CD14-positive monocyte (primary cell): ENCODE measurements at regions of chr1 and their contacts with region 1.

Region 1: DNA sequence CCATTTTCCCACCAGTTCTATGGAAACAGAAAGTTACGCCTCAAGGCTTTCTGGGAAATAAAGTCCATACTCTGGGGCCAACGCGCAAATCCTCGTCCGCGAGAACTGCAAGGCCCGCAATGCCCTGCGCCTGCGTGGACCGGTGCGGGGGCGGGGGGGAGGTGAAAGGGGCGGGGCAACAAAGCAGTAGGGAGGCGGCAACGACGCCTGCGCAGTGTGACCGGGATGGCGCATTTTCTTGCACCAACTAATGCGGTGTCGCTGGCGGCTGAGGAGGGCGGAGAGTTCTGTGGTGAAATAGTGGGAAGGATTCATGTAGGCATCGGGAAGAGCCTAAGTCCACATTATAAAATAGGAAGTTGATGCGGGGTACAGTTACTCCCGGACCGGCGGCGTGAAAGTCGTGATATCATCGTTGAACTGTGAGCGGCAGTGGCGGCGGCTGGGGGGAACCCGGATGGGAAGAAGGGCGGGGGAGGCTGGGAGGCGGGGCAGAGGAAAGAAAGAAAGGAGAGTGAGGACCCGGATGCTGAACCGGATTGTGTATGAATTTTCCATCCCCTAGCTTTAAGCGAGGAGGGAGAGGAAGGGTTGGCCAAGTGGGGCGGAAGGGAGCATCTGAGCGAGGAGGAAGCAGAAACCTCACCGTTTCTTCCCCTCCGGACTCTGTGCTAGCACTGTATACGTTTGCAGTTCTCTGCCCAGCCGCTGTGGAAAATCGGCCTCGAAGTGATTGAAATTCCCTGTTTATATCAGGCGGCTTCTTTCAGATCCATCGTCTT is at the start of gene GGPS1:
- DNase-seq: peak; percentile 99
- H3K4me3 ChIP-seq: peak within 1 kb of the TSS; percentile 81 to 99 (median 92)
- H3K4me3 Mint-ChIP-seq: no peak within 1 kb of the TSS
- H3K27ac ChIP-seq: peak within 1 kb of the TSS; percentile 90 to 96
- H3K27ac Mint-ChIP-seq: peak within 1 kb of the TSS in 5 of 7 donors; percentile 89 to 96 (median 90)
- H3K4me1 ChIP-seq: peaks cover 40 to 67% of the 10 kb centered on the region in 2 donors
- H3K4me1 Mint-ChIP-seq: peaks cover 37% of the 10 kb centered on the region
- H3K27me3 ChIP-seq: no peaks in the 10 kb centered on the region
- H3K27me3 Mint-ChIP-seq: peaks cover 0 to 2% (median 0%) of the 10 kb centered on the region in 3 donors
- CTCF ChIP-seq: peak; percentile 25
- polyA plus RNA-seq, gene GGPS1: 7.9 to 53.0 (median 45.8) TPM

Region 2: DNA sequence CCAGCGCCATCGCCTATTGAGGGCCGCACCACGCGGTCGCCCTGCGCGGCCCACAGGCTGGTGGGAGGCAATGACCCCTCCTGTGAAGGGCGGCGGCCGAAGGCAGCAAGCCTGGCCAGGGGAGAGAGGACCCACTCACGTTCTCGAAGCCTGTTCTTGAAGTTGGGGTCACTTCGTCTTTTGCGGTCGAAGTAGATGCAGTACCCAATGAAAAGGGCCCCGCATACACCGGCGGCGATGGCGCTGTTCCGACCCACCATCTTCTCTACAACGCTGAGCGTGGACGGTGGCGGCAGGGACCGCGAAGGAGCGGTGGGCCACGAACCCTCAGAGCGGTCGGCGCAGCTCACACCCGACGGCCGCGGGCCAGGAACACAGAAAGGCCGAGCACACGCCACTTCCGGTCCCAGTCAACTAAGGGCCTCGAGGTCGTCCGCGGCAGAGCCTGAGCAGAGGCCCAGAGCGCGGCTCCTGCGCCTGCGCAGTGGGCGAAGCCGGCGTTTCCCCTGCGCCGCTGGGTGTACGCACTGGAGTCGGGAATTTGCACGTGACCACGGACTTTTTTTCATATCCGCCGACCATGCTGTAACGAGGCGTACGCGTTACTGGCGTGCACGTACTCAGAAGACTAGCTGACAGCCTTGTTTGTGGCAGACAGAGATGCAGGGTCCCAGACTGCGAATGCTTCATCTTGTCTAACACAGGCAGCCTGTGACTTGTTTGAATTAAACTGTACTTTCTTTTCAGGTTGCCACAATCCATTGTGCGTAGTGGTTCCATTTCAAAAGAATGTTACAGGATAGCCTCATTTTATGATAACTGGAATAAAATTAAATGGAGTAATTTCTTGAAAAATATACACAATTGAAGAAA is 199.9 kb before region 1 on chr1 and contains the start of gene TOMM20:
- intact Hi-C with region 1: loop called in 1 of 2 experiments (anchors 10 kb)
- DNase-seq: peak; percentile 98 to 99 (median 98)
- H3K4me3 ChIP-seq: peak within 1 kb of the TSS; percentile 86 to 96 (median 89)
- H3K4me3 Mint-ChIP-seq: peak within 1 kb of the TSS; percentile 94 to 96
- H3K27ac ChIP-seq: peak within 1 kb of the TSS; percentile 88 to 96
- H3K27ac Mint-ChIP-seq: peak within 1 kb of the TSS; percentile 96 to 99 (median 98)
- H3K4me1 ChIP-seq: peaks cover 20 to 28% of the 10 kb centered on the region in 2 donors
- H3K4me1 Mint-ChIP-seq: peaks cover 20% of the 10 kb centered on the region
- H3K27me3 ChIP-seq: no peaks in the 10 kb centered on the region
- H3K27me3 Mint-ChIP-seq: no peaks in the 10 kb centered on the region
- CTCF ChIP-seq: no peak
- polyA plus RNA-seq, gene TOMM20: 26.5 to 34.8 (median 31.5) TPM

Region 3: GRCh38 chr1:235160957-235161684 is 167.4 kb before region 1 on chr1 and contains the start of gene RBM34:
- intact Hi-C with region 1: loop called in 1 of 2 experiments (anchors 5 kb)
- DNase-seq: peak; percentile 88 to 92 (median 91)
- H3K4me3 ChIP-seq: peak within 1 kb of the TSS; percentile 75 to 97 (median 95)
- H3K4me3 Mint-ChIP-seq: peak within 1 kb of the TSS; percentile 99 to 100
- H3K27ac ChIP-seq: peak within 1 kb of the TSS; percentile 94 to 96
- H3K27ac Mint-ChIP-seq: peak within 1 kb of the TSS; percentile 97 to 99 (median 99)
- H3K4me1 ChIP-seq: peaks cover 14 to 23% of the 10 kb centered on the region in 2 donors
- H3K4me1 Mint-ChIP-seq: peaks cover 12% of the 10 kb centered on the region
- H3K27me3 ChIP-seq: no peaks in the 10 kb centered on the region
- H3K27me3 Mint-ChIP-seq: no peaks in the 10 kb centered on the region
- CTCF ChIP-seq: no peak
- polyA plus RNA-seq, gene RBM34: 20.5 to 25.7 (median 22.5) TPM

Region 4: DNA sequence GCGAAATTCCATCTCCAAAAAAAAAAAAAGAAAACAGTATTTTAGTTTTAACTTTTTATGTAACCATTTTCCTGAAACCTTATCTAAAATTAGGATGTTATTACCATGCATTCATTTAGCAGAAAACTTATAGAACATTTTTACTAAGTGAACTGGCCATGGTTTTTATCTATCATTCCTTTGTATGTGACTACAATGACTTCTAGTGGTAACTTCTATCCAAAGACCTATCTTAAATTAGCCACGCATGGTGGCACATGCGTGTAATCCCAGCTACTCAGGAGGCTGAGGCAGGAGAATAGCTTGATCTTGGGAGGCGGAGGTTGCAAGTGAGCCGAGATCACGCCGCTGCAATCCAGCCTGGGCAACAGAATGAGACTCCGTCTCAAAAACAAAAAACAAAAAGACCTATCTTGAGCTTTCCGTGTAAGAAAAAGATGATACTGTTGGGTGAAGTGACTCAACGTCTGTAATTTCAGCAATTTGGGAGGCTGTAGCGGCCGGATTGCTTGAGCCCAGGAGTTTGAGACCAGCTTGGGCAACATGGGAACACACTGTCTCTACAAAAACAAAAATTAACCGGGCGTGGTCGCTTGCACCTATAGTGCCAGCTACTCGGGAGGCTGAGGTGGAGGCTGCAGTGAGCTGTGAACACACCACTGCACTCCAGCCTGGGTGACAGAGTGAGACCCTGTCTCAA is 11.3 kb after region 1 on chr1:
- intact Hi-C with region 1: no loop called
- DNase-seq: no peak
- H3K4me3 ChIP-seq: no peak overlapping the region
- H3K4me3 Mint-ChIP-seq: no peak overlapping the region
- H3K27ac ChIP-seq: no peak overlapping the region
- H3K27ac Mint-ChIP-seq: no peak overlapping the region
- H3K4me1 ChIP-seq: peaks cover 0 to 7% of the 10 kb centered on the region in 2 donors
- H3K4me1 Mint-ChIP-seq: peaks cover 8% of the 10 kb centered on the region
- H3K27me3 ChIP-seq: no peaks in the 10 kb centered on the region
- H3K27me3 Mint-ChIP-seq: no peaks in the 10 kb centered on the region
- CTCF ChIP-seq: no peak

Region 5: GRCh38 chr1:235367000-235367908 is 38.7 kb after region 1 on chr1 and contains the start of gene TBCE:
- intact Hi-C with region 1: loop called (anchors 2 to 5 kb)
- DNase-seq: peak; percentile 86 to 96 (median 89)
- H3K4me3 ChIP-seq: peak within 1 kb of the TSS; percentile 53 to 96 (median 92)
- H3K4me3 Mint-ChIP-seq: peak within 1 kb of the TSS; percentile 95 to 96
- H3K27ac ChIP-seq: peak within 1 kb of the TSS; percentile 71 to 83
- H3K27ac Mint-ChIP-seq: peak within 1 kb of the TSS; percentile 87 to 95 (median 94)
- H3K4me1 ChIP-seq: peaks cover 11 to 17% of the 10 kb centered on the region in 2 donors
- H3K4me1 Mint-ChIP-seq: peaks cover 22% of the 10 kb centered on the region
- H3K27me3 ChIP-seq: no peaks in the 10 kb centered on the region
- H3K27me3 Mint-ChIP-seq: peaks cover 0 to 3% (median 0%) of the 10 kb centered on the region in 3 donors
- CTCF ChIP-seq: no peak
- polyA plus RNA-seq, gene TBCE: 15.4 to 19.4 (median 17.6) TPM

Region 6: GRCh38 chr1:235504496-235505222 is 176.1 kb after region 1 on chr1:
- intact Hi-C with region 1: loop called (anchors 5 to 10 kb)
- DNase-seq: peak; percentile 98 to 99 (median 99)
- H3K4me3 ChIP-seq: peak overlapping the region; percentile 52 to 91 (median 65)
- H3K4me3 Mint-ChIP-seq: peak overlapping the region; percentile 97 to 98
- H3K27ac ChIP-seq: peak overlapping the region; percentile 85 to 93
- H3K27ac Mint-ChIP-seq: peak overlapping the region; percentile 94 to 99 (median 98)
- H3K4me1 ChIP-seq: peaks cover 24% of the 10 kb centered on the region in 2 donors
- H3K4me1 Mint-ChIP-seq: peaks cover 23% of the 10 kb centered on the region
- H3K27me3 ChIP-seq: no peaks in the 10 kb centered on the region
- H3K27me3 Mint-ChIP-seq: peaks cover 0 to 2% (median 2%) of the 10 kb centered on the region in 3 donors
- CTCF ChIP-seq: peak; percentile 95